ENCODE measurements at regions of chr20 and their contacts with region 1.

Region 1: GRCh38 chr20:46438156-46438750 is 31.8 kb upstream of the ELMO2 start:
- DNase-seq: peak in 7 of 14 experiments; percentile 3 to 57 (median 15)
- ATAC-seq: peak; percentile 61
- H3K4me3 ChIP-seq: no peak overlapping the region
- H3K4me3 Mint-ChIP-seq: no peak overlapping the region
- H3K27ac ChIP-seq: no peak overlapping the region
- H3K27ac Mint-ChIP-seq: no peak overlapping the region
- H3K4me1 ChIP-seq: no peaks in the 10 kb centered on the region
- H3K4me1 Mint-ChIP-seq: no peaks in the 10 kb centered on the region
- H3K27me3 ChIP-seq: peaks cover 0 to 19% of the 10 kb centered on the region in 2 experiments
- H3K27me3 Mint-ChIP-seq: peaks cover 52% of the 10 kb centered on the region
- CTCF ChIP-seq: no peak

Region 2: GRCh38 chr20:46132705-46133120 is 305.5 kb before region 1 on chr20:
- CTCF ChIA-PET with region 1: no interaction called
- POLR2A ChIA-PET with region 1: no interaction called
- intact Hi-C with region 1: loop called (anchors 1 to 2 kb)
- DNase-seq: peak; percentile 26 to 73 (median 49)
- ATAC-seq: peak; percentile 68
- H3K4me3 ChIP-seq: no peak overlapping the region
- H3K4me3 Mint-ChIP-seq: no peak overlapping the region
- H3K27ac ChIP-seq: no peak overlapping the region
- H3K27ac Mint-ChIP-seq: no peak overlapping the region
- H3K4me1 ChIP-seq: no peaks in the 10 kb centered on the region
- H3K4me1 Mint-ChIP-seq: no peaks in the 10 kb centered on the region
- H3K27me3 ChIP-seq: peaks cover 15 to 26% of the 10 kb centered on the region in 2 experiments
- H3K27me3 Mint-ChIP-seq: peaks cover 65% of the 10 kb centered on the region
- CTCF ChIP-seq: peak; percentile 76

Region 3: DNA sequence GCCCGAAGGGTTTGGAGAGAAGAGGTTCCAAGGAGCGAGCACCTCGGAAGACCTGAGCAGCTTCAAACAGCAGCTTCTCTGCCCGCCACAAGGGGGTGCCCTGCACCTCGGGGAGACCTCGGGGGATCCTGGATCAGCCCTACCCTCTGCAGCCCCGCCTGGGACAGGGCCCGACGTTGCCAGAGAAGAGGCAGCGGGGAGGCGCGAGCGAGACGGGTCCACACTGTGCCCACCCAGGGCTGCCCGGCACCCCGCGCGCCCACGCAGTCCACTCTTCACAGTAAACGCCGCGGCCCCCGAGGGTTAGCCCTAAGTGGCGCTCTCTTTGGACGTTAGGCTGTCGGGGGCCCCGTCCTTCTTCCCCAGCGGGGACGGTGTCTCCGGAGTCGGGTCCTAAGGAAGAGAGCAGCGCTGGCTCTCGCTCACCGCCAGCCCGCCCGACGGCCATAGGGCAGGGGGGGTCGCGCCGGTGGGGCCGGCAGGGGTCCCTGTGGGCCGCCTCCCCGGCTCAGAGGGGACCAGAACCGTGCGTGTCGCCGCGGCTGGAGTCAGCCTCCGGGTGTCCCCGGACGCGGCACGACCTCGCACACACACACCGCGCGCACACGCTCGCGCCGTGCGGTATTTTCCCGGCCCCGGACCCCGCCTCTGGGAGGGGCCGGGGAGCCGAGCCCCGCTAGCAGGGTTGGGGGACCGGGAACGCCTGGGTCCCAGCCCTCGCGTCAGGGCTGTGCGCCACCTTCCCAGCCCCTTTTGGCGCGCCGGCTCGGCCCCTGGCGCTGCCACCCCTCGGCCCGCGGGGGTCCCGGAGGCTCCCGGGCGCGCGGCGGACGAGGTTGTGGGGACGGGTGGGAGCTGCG is 130.9 kb before region 1 on chr20:
- CTCF ChIA-PET with region 1: interaction called, 8 read pairs
- POLR2A ChIA-PET with region 1: interaction called, 3 read pairs
- intact Hi-C with region 1: loop called (anchors 1 kb)
- DNase-seq: peak; percentile 56 to 88 (median 68)
- ATAC-seq: peak; percentile 84
- H3K4me3 ChIP-seq: peak overlapping the region; percentile 37
- H3K4me3 Mint-ChIP-seq: peak overlapping the region; percentile 65
- H3K27ac ChIP-seq: no peak overlapping the region
- H3K27ac Mint-ChIP-seq: no peak overlapping the region
- H3K4me1 ChIP-seq: peaks cover 22% of the 10 kb centered on the region
- H3K4me1 Mint-ChIP-seq: peaks cover 31% of the 10 kb centered on the region
- H3K27me3 ChIP-seq: peaks cover 46 to 67% of the 10 kb centered on the region in 2 experiments
- H3K27me3 Mint-ChIP-seq: peaks cover 83% of the 10 kb centered on the region
- CTCF ChIP-seq: peak; percentile 77

Region 4: DNA sequence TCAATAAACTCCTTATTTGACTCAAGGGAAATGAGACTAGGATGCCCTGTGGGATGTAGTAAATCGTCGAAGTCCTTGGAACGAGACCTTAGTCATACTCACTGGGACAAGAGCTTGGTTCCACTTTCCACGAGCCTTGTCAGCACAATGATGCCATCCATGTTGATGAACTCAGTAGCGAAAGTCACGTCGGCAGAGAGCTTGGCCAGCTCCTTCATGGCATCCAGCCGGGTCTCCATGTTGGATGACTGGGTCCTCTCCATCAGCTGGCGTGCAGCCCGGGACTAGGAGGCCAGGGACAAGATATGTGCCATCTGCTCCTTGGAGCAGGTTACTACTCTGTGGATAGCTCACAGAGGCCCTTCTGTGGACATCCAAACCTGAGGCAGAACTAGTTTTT is 49.3 kb before region 1 on chr20:
- CTCF ChIA-PET with region 1: no interaction called
- POLR2A ChIA-PET with region 1: no interaction called
- intact Hi-C with region 1: no loop called
- DNase-seq: no peak
- ATAC-seq: no peak
- H3K4me3 ChIP-seq: no peak overlapping the region
- H3K4me3 Mint-ChIP-seq: no peak overlapping the region
- H3K27ac ChIP-seq: no peak overlapping the region
- H3K27ac Mint-ChIP-seq: no peak overlapping the region
- H3K4me1 ChIP-seq: no peaks in the 10 kb centered on the region
- H3K4me1 Mint-ChIP-seq: no peaks in the 10 kb centered on the region
- H3K27me3 ChIP-seq: no peaks in the 10 kb centered on the region
- H3K27me3 Mint-ChIP-seq: no peaks in the 10 kb centered on the region
- CTCF ChIP-seq: no peak